CD4-positive, alpha-beta T cell (primary cell): ENCODE measurements at regions of chr6 and their contacts with region 1.

Region 1: DNA sequence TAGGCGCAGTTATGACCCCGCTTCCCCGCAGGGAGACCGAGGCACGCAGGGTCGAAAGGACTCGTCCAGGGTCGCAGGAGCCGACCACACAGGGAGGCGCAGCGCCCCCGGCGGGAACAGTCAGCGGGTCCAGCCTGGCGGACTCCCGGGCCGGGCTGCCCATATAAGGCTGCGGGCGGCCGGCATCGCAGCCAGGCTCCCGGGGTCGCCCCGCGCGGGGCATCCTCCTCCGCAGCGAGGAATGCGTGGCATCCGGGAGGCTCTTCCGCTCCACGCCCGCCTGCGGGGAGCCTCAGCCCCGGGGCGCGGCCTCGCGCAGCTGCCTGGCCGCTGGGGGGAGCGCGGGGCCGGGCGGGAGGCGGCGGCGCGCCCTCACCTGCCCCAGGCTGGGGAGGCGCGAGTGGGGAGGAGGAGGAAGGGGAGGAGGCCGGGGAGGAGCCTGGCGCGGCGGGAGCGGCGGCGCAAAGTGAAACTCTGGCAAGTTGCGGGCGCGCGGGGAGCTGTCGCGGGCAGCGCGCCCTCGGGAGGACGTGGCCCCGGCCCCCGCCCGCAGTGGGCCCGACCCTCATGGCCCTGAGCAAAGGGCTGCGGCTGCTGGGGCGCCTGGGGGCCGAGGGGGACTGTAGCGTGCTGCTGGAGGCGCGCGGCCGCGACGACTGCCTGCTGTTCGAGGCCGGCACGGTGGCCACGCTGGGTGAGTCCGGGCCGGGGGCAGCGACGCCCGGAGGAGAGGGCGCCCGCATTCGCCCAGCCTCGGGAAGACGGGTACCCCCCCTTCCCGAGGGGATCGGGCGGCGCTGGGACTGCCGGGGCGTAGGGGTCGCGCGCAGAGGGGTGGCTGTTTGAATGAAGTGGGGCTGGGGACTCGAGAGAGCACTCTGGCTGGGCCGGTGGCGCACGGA is at the start of gene SYNJ2:
- DNase-seq: peak; percentile 71 to 94 (median 83)
- ATAC-seq: peak; percentile 88
- H3K4me3 ChIP-seq: peak within 1 kb of the TSS; percentile 81
- H3K4me3 Mint-ChIP-seq: peak within 1 kb of the TSS; percentile 87
- H3K27ac ChIP-seq: peak within 1 kb of the TSS; percentile 55 to 58
- H3K27ac Mint-ChIP-seq: peak within 1 kb of the TSS; percentile 74
- H3K4me1 ChIP-seq: peaks cover 54% of the 10 kb centered on the region
- H3K4me1 Mint-ChIP-seq: peaks cover 56% of the 10 kb centered on the region
- H3K27me3 ChIP-seq: no peaks in the 10 kb centered on the region
- H3K27me3 Mint-ChIP-seq: no peaks in the 10 kb centered on the region
- CTCF ChIP-seq: peak; percentile 37
- total RNA-seq, gene SYNJ2: 34.6 to 38.0 TPM

Region 2: DNA sequence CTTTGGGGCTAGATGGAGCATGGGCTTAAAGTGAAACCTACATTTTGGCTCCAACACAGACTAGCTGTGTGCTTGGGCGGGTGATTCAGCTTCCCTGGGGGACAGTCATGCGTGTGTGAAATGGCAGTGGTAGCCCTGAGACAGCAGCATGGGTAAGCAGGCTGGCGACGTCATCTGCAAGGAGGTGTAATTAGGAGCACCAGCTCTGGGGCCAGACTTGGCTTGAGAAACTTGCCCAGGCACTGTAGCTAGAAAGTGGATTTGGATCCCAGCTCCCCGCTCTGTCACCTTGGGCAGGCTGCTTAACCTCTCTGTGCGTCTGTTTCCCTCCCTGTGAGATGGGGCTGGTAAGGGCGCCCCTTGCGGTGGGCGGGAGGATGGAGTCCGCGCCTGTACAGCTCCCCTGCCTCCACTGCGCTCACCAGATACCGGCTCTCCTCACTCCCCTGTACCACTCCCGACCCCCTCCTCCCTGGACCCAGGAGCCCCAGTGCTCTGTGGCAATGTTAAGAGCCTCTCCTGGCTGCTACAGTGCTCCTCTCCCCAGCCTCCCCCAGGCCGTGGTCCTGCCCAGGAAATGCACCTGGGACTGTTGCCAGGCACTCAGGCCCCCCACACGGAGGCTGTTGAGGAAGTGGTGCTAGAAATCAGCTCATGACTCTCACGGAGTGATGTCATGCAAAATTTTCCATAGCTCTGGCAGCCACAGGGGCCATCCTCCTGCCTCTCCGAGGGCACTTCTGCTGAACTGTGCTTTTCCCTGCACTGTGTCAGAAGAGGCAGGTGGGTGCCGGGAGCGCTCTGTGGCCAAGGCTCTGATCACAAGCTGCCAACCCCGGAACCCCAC is 44.6 kb after region 1 on chr6:
- CTCF ChIA-PET with region 1: interaction called, 34 read pairs
- POLR2A ChIA-PET with region 1: interaction called, 35 read pairs
- intact Hi-C with region 1: loop called (anchors 1 to 2 kb)
- DNase-seq: peak; percentile 52 to 92 (median 74)
- ATAC-seq: peak; percentile 75
- H3K4me3 ChIP-seq: peak overlapping the region; percentile 42
- H3K4me3 Mint-ChIP-seq: peak overlapping the region; percentile 86
- H3K27ac ChIP-seq: peak overlapping the region; percentile 77 to 88
- H3K27ac Mint-ChIP-seq: peak overlapping the region; percentile 92
- H3K4me1 ChIP-seq: peaks cover 42% of the 10 kb centered on the region
- H3K4me1 Mint-ChIP-seq: peaks cover 42% of the 10 kb centered on the region
- H3K27me3 ChIP-seq: no peaks in the 10 kb centered on the region
- H3K27me3 Mint-ChIP-seq: no peaks in the 10 kb centered on the region
- CTCF ChIP-seq: peak; percentile 85

Region 3: GRCh38 chr6:158037021-158037420 is 55.4 kb after region 1 on chr6:
- CTCF ChIA-PET with region 1: no interaction called
- POLR2A ChIA-PET with region 1: no interaction called
- intact Hi-C with region 1: no loop called
- DNase-seq: no peak
- ATAC-seq: no peak
- H3K4me3 ChIP-seq: no peak overlapping the region
- H3K4me3 Mint-ChIP-seq: no peak overlapping the region
- H3K27ac ChIP-seq: no peak overlapping the region
- H3K27ac Mint-ChIP-seq: no peak overlapping the region
- H3K4me1 ChIP-seq: peaks cover 13% of the 10 kb centered on the region
- H3K4me1 Mint-ChIP-seq: peaks cover 18% of the 10 kb centered on the region
- H3K27me3 ChIP-seq: no peaks in the 10 kb centered on the region
- H3K27me3 Mint-ChIP-seq: no peaks in the 10 kb centered on the region
- CTCF ChIP-seq: no peak

Region 4: DNA sequence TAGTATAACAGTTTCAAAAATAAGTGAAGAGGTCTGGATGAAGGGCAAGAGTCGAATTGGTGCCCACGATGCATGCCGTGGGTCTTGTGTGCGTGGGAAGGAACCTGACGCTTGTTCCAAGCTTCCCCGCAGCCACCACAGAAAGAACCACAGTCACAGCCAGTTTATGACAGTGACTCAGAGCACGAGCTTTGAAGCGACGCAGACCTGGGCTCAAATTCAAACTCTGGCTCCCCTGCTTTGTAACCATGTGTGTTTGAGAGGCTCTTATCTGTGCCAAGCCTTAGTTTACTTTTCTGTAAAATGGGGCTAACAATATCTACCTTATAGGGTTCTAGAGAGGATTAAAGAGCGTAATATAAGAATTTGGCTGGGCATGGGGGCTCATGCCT is 65.5 kb after region 1 on chr6:
- CTCF ChIA-PET with region 1: interaction called, 3 read pairs
- POLR2A ChIA-PET with region 1: interaction called, 12 read pairs
- intact Hi-C with region 1: no loop called
- DNase-seq: peak in 10 of 14 experiments; percentile 13 to 69 (median 36)
- ATAC-seq: peak; percentile 62
- H3K4me3 ChIP-seq: no peak overlapping the region
- H3K4me3 Mint-ChIP-seq: no peak overlapping the region
- H3K27ac ChIP-seq: no peak overlapping the region
- H3K27ac Mint-ChIP-seq: peak overlapping the region; percentile 60
- H3K4me1 ChIP-seq: peaks cover 15% of the 10 kb centered on the region
- H3K4me1 Mint-ChIP-seq: peaks cover 25% of the 10 kb centered on the region
- H3K27me3 ChIP-seq: no peaks in the 10 kb centered on the region
- H3K27me3 Mint-ChIP-seq: no peaks in the 10 kb centered on the region
- CTCF ChIP-seq: no peak

Region 5: DNA sequence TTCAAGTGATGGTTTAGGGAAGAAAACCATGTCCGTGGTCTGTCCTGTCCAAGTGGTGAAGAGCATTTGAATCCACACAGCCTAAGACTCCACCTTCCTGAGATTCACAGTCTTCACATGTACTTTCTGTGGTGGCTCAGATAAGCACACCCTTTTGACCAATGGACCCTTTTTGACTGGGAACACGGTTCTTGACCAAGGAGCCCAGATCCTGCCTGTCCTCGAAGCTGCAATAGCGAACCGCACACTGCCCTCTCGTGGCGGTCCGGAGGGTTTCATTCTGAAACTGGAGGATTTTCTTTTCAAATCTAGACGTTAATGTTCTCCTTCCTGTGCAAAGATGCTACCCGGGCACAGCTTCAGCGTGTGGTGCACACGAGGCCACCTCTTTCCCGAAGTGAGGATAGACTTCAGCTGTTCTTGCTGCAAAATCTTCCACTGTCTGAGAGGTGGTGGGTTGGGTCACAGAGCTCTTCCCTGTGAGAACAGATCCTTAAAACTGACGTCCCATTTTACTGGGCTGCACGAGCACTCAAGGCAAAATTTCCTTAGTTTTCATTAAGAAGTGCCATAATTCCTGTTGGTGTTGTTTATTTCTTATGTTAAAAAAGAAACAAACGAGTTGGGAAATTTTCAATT is 90.6 kb after region 1 on chr6:
- CTCF ChIA-PET with region 1: no interaction called
- POLR2A ChIA-PET with region 1: interaction called, 4 read pairs
- intact Hi-C with region 1: loop called (anchors 2 kb)
- DNase-seq: peak; percentile 44 to 81 (median 62)
- ATAC-seq: peak; percentile 67
- H3K4me3 ChIP-seq: no peak overlapping the region
- H3K4me3 Mint-ChIP-seq: no peak overlapping the region
- H3K27ac ChIP-seq: no peak overlapping the region
- H3K27ac Mint-ChIP-seq: no peak overlapping the region
- H3K4me1 ChIP-seq: peaks cover 17% of the 10 kb centered on the region
- H3K4me1 Mint-ChIP-seq: peaks cover 6% of the 10 kb centered on the region
- H3K27me3 ChIP-seq: no peaks in the 10 kb centered on the region
- H3K27me3 Mint-ChIP-seq: no peaks in the 10 kb centered on the region
- CTCF ChIP-seq: peak; percentile 80

Region 6: DNA sequence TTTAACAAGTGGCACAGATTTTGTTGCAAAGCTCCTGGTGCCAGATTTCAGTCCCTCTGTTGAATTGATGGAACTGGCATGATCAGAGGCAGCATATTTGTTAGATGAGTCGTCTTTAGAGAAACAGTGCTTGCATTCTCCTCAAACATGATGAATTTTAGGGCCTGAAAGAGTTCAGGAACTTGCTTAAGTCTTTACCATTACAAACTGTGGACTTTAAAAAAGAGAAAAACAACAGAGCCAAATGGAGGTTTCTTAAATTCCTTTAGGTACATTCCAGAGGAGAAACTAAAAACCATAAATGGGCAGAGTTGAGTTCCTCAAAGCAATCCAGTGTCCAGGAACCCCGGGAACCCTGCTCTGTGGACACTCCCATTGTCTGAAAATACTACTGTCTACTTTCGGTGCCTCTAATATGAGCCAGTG is 189.0 kb after region 1 on chr6:
- CTCF ChIA-PET with region 1: no interaction called
- POLR2A ChIA-PET with region 1: no interaction called
- intact Hi-C with region 1: loop called in 1 of 2 experiments (anchors 5 kb)
- DNase-seq: no peak
- ATAC-seq: no peak
- H3K4me3 ChIP-seq: no peak overlapping the region
- H3K4me3 Mint-ChIP-seq: no peak overlapping the region
- H3K27ac ChIP-seq: no peak overlapping the region
- H3K27ac Mint-ChIP-seq: no peak overlapping the region
- H3K4me1 ChIP-seq: peaks cover 14% of the 10 kb centered on the region
- H3K4me1 Mint-ChIP-seq: peaks cover 42% of the 10 kb centered on the region
- H3K27me3 ChIP-seq: no peaks in the 10 kb centered on the region
- H3K27me3 Mint-ChIP-seq: no peaks in the 10 kb centered on the region
- CTCF ChIP-seq: no peak

Region 7: DNA sequence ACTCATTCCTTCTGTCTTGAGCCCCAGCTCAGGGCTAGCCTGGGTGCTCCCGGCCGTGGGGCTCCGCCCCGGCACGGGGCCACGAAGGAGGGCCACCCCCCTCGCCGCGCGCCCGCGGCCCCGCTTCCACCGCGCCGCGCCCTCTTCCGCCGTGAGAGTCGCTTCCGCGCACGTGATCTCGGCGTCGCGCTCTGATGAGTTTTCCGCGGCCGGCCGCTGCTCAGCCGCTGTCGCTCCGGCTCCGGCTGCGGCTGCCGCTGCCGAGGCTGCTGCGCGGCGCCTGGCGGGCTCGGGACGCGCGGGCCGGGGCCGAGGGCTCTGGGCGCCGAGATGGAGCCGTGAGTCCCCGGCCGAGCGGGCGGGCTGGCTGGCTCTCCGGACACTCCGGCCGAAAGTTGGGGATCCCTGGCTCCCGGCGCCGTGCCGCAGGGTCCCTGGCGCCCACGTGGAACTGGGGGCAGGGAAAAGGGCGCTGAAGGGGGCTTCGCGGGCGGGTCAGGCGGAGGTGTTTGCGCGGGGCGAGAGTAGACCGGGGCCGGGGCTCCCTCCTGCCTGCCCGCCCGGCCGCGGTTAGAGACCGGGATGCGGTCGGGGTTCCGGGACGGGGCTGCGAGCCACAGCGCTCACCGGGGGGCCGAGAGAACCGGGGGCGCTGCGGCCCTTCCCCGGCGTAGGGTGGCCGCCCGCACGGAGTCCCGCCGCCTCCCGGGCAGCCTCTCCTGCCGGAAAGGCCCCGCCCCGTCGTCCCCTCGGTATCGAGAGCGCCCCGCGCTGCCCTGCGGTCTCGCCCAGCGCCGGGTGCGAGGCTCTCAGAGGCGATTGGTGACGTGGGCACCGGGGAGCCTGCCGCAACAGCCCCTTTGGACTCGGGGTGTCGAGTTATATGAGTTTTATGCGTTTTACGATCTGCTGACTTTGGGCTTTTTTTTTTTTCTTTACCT is 578.5 kb after region 1 on chr6 and contains the start of gene TMEM181:
- CTCF ChIA-PET with region 1: no interaction called
- POLR2A ChIA-PET with region 1: no interaction called
- intact Hi-C with region 1: loop called in 1 of 2 experiments (anchors 5 kb)
- DNase-seq: peak; percentile 76 to 96 (median 86)
- ATAC-seq: peak; percentile 91
- H3K4me3 ChIP-seq: peak within 1 kb of the TSS; percentile 79
- H3K4me3 Mint-ChIP-seq: peak within 1 kb of the TSS; percentile 96
- H3K27ac ChIP-seq: peak within 1 kb of the TSS; percentile 59 to 78
- H3K27ac Mint-ChIP-seq: peak within 1 kb of the TSS; percentile 87
- H3K4me1 ChIP-seq: peaks cover 52% of the 10 kb centered on the region
- H3K4me1 Mint-ChIP-seq: peaks cover 48% of the 10 kb centered on the region
- H3K27me3 ChIP-seq: no peaks in the 10 kb centered on the region
- H3K27me3 Mint-ChIP-seq: no peaks in the 10 kb centered on the region
- CTCF ChIP-seq: no peak
- total RNA-seq, gene TMEM181: 10.2 to 10.9 TPM